SK-N-SH (cell line): ENCODE measurements at regions of chr2 and their contacts with region 1.

Region 1: DNA sequence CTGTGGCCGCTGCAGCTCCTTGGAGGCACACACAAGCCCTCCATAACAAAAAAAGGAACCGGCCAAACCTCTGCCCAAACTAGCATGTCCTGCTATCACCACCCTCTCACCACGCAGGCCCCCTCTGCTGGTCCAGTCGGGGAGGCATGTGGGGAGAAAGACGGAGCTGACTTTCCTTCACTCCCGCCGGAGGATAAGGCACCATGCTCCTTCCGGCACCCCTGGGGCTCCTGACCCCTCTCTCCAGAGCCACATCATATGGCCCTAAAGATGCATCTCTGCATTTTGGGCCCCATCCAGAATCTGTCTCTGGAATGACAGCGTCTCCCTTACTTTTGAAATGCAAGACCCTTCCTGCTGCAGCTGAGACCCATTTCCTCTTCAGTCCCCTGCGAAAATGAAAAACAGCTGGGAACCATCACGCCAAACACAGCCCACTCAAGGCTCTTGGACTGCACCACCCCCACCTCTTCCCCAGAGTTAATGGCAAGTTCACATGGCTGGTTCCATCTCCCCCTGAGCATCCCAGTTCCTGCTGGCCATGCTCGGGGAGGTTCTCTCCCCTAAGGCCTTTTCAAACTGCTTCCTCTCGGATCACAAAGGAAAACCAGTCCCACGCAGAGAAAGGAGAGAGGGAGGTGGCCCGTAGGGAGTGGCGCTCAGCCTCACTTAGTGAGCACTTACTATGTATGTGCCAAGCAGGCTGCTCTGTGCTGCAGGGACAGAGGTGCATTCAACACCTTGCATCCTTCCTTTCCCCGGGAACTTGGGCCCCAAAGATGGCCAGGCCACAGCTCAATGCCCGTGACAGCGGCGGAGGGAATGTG is 35.2 kb upstream of the MLPH start:
- DNase-seq: peak; percentile 87
- H3K4me3 ChIP-seq: no peak overlapping the region
- H3K27ac ChIP-seq: peak overlapping the region in 1 of 2 experiments; percentile 83; a peak in 2 of 4 replicates
- H3K4me1 ChIP-seq: peaks cover 0 to 24% of the 10 kb centered on the region in 2 experiments; a peak in 1 of 4 replicates
- H3K27me3 ChIP-seq: no peaks in the 10 kb centered on the region
- CTCF ChIP-seq: peak; percentile 28
- EP300 ChIP-seq: peak in 1 of 2 experiments; percentile 68; a peak in 2 of 4 replicates
- RAD21 ChIP-seq: peak; percentile 47

Region 2: DNA sequence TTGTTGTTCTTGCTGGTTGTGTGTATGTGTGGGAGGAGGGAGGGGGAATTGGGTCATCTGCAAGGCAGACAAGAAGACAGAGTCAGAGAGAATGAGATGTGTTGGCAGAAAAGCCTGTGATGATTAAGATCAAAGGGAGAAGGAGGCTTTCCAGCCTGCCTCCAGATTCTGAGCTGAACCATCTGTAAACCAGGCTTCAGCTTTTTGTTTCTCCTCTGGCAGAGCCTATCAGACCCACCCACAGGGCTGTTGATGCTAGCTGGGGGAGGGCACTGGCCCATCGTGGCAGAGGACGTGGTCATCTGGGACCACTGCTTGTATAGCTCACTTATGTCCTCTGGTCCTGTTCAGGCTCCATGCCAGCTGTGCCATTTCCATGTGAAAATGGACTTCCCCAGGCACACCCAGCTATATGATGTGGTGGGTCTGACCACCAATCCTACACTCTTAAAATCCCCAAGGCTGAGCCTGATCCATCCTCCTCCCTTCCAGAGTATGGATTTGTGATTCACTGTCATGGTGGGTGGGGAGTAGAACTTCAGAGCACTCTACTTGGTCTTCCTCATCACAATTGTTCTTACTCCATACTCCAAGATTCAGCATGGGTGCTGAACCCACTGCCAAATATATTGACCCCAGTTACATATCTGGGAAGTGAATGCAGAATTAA is 10.1 kb before region 1 on chr2:
- CTCF ChIA-PET with region 1: interaction called, 14 read pairs
- POLR2A ChIA-PET with region 1: interaction called, 5 read pairs
- DNase-seq: peak; percentile 80
- H3K4me3 ChIP-seq: no peak overlapping the region
- H3K27ac ChIP-seq: peak overlapping the region; percentile 85 to 93
- H3K4me1 ChIP-seq: peaks cover 17 to 34% of the 10 kb centered on the region in 2 experiments
- H3K27me3 ChIP-seq: no peaks in the 10 kb centered on the region
- CTCF ChIP-seq: no peak
- EP300 ChIP-seq: peak; percentile 32 to 63; a peak in 3 of 4 replicates
- RAD21 ChIP-seq: peak; percentile 1; the same call in 1 of the 2 replicates

Region 3: DNA sequence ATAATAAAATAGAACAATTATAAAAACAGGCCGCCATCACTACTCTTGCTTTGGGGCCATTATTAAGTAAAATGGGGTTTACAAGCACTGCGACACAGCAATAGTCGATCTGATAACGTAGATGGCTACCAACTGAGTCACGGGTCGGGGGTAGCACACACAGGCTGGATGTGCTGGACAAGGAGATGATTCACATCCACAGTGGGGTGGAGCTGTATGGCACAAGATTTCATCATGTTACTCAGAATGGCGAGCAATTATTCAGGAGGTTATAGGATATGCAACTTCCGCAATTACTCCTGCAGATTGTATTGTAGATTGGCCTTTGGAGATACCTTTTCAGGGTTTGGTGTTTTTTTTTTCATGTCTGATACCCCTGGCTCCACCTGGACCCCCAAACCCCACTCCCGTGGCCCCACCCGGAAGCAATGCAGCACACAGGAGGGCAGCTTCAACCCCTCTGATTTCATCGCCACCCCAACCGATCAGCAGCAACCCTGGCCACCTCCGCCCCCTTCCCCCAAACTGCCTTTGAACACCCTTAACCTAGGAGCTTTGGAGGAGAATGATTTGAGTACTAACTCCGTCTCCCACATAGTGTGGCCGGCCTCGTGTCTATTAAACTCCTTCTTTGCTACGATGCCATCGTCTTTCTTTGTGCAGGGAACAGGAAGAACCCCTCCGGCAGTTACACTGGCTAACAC is 13.8 kb after region 1 on chr2:
- CTCF ChIA-PET with region 1: interaction called, 13 read pairs
- POLR2A ChIA-PET with region 1: interaction called, 5 read pairs
- DNase-seq: no peak
- H3K4me3 ChIP-seq: no peak overlapping the region
- H3K27ac ChIP-seq: peak overlapping the region; percentile 89 to 96
- H3K4me1 ChIP-seq: peaks cover 11 to 16% of the 10 kb centered on the region in 2 experiments; a peak in 2 of 4 replicates
- H3K27me3 ChIP-seq: no peaks in the 10 kb centered on the region
- CTCF ChIP-seq: no peak
- EP300 ChIP-seq: peak in 1 of 2 experiments; percentile 62; a peak in 1 of 4 replicates
- RAD21 ChIP-seq: no peak